Activated CD4-positive, alpha-beta memory T cell treated with anti-CD3 and anti-CD28 coated beads, Interleukin-2, amount 10 ng/mL, durations not matched to agents 7 days and 5 days (primary cell): ENCODE measurements at regions of chr17 and their contacts with region 1.

Region 1: GRCh38 chr17:1488030-1488863 is 4.2 kb downstream of the MYO1C start:
- DNase-seq: peak; percentile 79
- H3K4me3 Mint-ChIP-seq: peak overlapping the region; percentile 77
- H3K27ac Mint-ChIP-seq: peak overlapping the region; percentile 75
- H3K4me1 Mint-ChIP-seq: peaks cover 50% of the 10 kb centered on the region
- H3K27me3 Mint-ChIP-seq: peaks cover 2% of the 10 kb centered on the region

Region 2: GRCh38 chr17:1455797-1456599 is 32.2 kb before region 1 on chr17 and contains the start of gene CRK:
- CTCF ChIA-PET with region 1: no interaction called
- POLR2A ChIA-PET with region 1: interaction called, 10 read pairs
- DNase-seq: peak; percentile 99
- H3K4me3 Mint-ChIP-seq: peak within 1 kb of the TSS; percentile 88
- H3K27ac Mint-ChIP-seq: peak within 1 kb of the TSS; percentile 87
- H3K4me1 Mint-ChIP-seq: peaks cover 51% of the 10 kb centered on the region
- H3K27me3 Mint-ChIP-seq: peaks cover 12% of the 10 kb centered on the region
- total RNA-seq, gene CRK: 19.9 to 21.9 TPM

Region 3: DNA sequence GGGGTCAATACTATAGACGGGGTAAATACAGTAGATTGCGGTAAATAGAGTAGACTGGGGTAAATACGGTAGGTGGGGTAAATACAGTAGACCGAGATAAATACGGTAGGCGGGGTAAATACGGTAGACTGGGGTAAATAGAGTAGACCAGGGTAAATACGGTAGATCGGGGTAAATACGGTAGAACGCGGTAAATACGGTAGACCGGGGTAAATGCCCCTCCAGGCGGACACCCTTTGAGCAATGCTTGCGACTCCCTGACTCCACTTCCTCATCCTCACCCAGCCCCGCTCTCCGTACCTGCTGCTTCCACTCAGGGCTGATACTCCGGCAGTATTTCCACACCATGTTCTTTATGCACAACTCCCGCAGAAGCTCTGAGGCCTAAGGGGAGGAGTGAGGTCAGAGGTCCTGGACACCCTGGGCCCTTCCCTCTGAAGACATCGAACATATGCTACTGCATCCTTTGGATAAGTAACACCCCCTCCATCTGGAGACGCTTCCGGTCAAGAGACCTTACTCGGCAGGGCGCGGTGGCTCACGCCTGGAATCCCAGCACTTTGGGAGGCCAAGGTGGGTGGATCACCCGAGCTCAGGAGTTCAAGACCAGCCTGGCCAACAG is 18.9 kb before region 1 on chr17:
- CTCF ChIA-PET with region 1: no interaction called
- POLR2A ChIA-PET with region 1: no interaction called
- DNase-seq: no peak
- H3K4me3 Mint-ChIP-seq: no peak overlapping the region
- H3K27ac Mint-ChIP-seq: no peak overlapping the region
- H3K4me1 Mint-ChIP-seq: peaks cover 15% of the 10 kb centered on the region
- H3K27me3 Mint-ChIP-seq: no peaks in the 10 kb centered on the region